Sigmoid colon (tissue), 7 donors: ENCODE measurements at regions of chr19 and their contacts with region 1.

Region 1: GRCh38 chr19:16185123-16185767 is at the start of gene FAM32A:
- DNase-seq: peak; percentile 100
- H3K4me3 ChIP-seq: peak within 1 kb of the TSS; percentile 81 to 90 (median 83)
- H3K27ac ChIP-seq: peak within 1 kb of the TSS; percentile 83 to 87 (median 84)
- H3K4me1 ChIP-seq: peaks cover 0 to 25% (median 21%) of the 10 kb centered on the region in 4 donors
- H3K27me3 ChIP-seq: no peaks in the 10 kb centered on the region
- CTCF ChIP-seq: no peak
- EP300 ChIP-seq: no peak
- POLR2A ChIP-seq: peak; percentile 74 to 78
- total RNA-seq, gene FAM32A: 86.9 to 97.7 (median 92.5) TPM

Region 2: GRCh38 chr19:16088351-16089009 is 96.8 kb before region 1 on chr19:
- intact Hi-C with region 1: no loop called
- DNase-seq: peak; percentile 73
- H3K4me3 ChIP-seq: no peak overlapping the region
- H3K27ac ChIP-seq: peak overlapping the region; percentile 97 to 100 (median 100)
- H3K4me1 ChIP-seq: peaks cover 0 to 88% (median 60%) of the 10 kb centered on the region in 4 donors
- H3K27me3 ChIP-seq: no peaks in the 10 kb centered on the region
- CTCF ChIP-seq: peak in 2 of 4 experiments; percentile 10
- EP300 ChIP-seq: no peak
- POLR2A ChIP-seq: no peak

Region 3: GRCh38 chr19:16111160-16111908 is 73.9 kb before region 1 on chr19 and contains the start of gene RAB8A:
- intact Hi-C with region 1: loop called (anchors 5 kb)
- DNase-seq: peak; percentile 100
- H3K4me3 ChIP-seq: peak within 1 kb of the TSS; percentile 94 to 99 (median 94)
- H3K27ac ChIP-seq: peak within 1 kb of the TSS; percentile 91 to 96 (median 95)
- H3K4me1 ChIP-seq: peaks cover 0 to 49% (median 42%) of the 10 kb centered on the region in 4 donors
- H3K27me3 ChIP-seq: no peaks in the 10 kb centered on the region
- CTCF ChIP-seq: peak; percentile 89 to 98 (median 96)
- EP300 ChIP-seq: no peak
- POLR2A ChIP-seq: no peak
- total RNA-seq, gene RAB8A: 32.8 to 43.9 (median 34.9) TPM

Region 4: GRCh38 chr19:16197622-16198369 is 12.6 kb after region 1 on chr19 and contains the start of gene AP1M1:
- intact Hi-C with region 1: loop called (anchors 1 kb)
- DNase-seq: peak; percentile 99
- H3K4me3 ChIP-seq: peak within 1 kb of the TSS; percentile 92 to 100 (median 94)
- H3K27ac ChIP-seq: peak within 1 kb of the TSS; percentile 85 to 90 (median 90)
- H3K4me1 ChIP-seq: peaks cover 0 to 32% (median 27%) of the 10 kb centered on the region in 4 donors
- H3K27me3 ChIP-seq: no peaks in the 10 kb centered on the region
- CTCF ChIP-seq: no peak
- EP300 ChIP-seq: no peak
- POLR2A ChIP-seq: no peak
- total RNA-seq, gene AP1M1: 57.1 to 63.7 (median 60.8) TPM

Region 5: DNA sequence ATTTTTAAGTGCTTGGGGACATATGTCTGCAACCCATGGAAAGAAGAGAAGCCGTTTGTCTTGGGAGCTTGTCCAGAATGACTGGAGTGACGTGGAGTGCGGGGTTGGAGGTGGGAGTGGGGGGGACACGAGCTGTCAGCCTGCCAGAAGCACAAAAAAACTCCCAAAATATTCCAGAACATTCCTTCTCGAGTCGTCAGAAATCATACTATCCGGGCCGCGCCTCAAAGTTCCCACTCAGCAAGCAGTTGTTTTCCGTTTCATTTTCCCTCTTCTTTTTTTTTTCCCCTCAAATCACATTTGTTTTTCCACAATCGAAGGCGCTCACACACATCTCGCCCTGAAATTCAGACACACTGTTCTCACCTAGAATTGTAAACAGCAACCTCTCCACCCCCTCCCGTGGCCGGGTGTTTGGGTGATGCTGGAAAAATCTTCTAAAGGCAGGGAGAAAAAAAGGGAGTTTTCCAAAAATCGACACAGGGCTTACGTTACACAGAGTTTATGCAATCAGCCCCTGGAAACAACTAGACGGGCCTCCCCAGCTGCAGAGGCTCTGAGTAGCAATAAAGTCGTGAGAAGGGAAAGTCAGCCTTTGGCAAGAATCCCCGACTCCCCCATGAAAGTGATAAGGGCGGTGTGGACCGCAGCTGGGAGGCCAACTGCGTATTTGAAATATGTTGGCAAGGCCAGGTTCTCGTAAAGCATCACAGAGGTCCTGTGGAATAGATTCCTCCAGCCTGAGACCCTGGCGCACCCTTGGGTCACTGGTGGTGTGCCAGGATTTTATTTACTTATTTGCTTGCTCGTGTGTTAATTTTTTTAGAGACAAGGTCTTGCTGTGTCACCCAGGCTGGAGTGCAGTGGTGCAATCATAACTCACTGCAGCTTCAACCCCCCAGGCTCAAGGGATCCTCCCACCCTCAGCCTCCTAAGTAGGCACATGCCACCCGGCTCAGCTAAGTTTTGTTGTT is 108.2 kb after region 1 on chr19:
- intact Hi-C with region 1: no loop called
- DNase-seq: peak; percentile 96
- H3K4me3 ChIP-seq: peak overlapping the region; percentile 11 to 36 (median 24)
- H3K27ac ChIP-seq: peak overlapping the region; percentile 77 to 92 (median 83)
- H3K4me1 ChIP-seq: peaks cover 0 to 32% (median 22%) of the 10 kb centered on the region in 4 donors
- H3K27me3 ChIP-seq: no peaks in the 10 kb centered on the region
- CTCF ChIP-seq: no peak
- EP300 ChIP-seq: peak in 1 of 4 donors; percentile 4
- POLR2A ChIP-seq: no peak

Region 6: GRCh38 chr19:16435238-16435917 is 250.1 kb after region 1 on chr19:
- intact Hi-C with region 1: no loop called
- DNase-seq: peak; percentile 94
- H3K4me3 ChIP-seq: no peak overlapping the region
- H3K27ac ChIP-seq: peak overlapping the region; percentile 58 to 86 (median 81)
- H3K4me1 ChIP-seq: peaks cover 0 to 30% (median 16%) of the 10 kb centered on the region in 4 donors
- H3K27me3 ChIP-seq: no peaks in the 10 kb centered on the region
- CTCF ChIP-seq: no peak
- EP300 ChIP-seq: no peak
- POLR2A ChIP-seq: no peak